Caco-2 (cell line): ENCODE measurements at regions of chr2 and their contacts with region 1.

Region 1: GRCh38 chr2:54106631-54107454 is 8.6 kb upstream of the ACYP2 start:
- DNase-seq: peak in 1 of 2 experiments; percentile 63
- H3K4me3 ChIP-seq: no peak overlapping the region
- H3K4me3 Mint-ChIP-seq: no peak overlapping the region
- H3K27ac Mint-ChIP-seq: no peak overlapping the region
- H3K4me1 ChIP-seq: 0 out of 2 replicates have a peak, but pooled peaks cover 4% of the 10 kb centered on the region
- H3K4me1 Mint-ChIP-seq: no peaks in the 10 kb centered on the region
- H3K27me3 ChIP-seq: no peaks in the 10 kb centered on the region
- H3K27me3 Mint-ChIP-seq: peaks cover 4% of the 10 kb centered on the region
- CTCF ChIP-seq: peak; percentile 69 to 72

Region 2: DNA sequence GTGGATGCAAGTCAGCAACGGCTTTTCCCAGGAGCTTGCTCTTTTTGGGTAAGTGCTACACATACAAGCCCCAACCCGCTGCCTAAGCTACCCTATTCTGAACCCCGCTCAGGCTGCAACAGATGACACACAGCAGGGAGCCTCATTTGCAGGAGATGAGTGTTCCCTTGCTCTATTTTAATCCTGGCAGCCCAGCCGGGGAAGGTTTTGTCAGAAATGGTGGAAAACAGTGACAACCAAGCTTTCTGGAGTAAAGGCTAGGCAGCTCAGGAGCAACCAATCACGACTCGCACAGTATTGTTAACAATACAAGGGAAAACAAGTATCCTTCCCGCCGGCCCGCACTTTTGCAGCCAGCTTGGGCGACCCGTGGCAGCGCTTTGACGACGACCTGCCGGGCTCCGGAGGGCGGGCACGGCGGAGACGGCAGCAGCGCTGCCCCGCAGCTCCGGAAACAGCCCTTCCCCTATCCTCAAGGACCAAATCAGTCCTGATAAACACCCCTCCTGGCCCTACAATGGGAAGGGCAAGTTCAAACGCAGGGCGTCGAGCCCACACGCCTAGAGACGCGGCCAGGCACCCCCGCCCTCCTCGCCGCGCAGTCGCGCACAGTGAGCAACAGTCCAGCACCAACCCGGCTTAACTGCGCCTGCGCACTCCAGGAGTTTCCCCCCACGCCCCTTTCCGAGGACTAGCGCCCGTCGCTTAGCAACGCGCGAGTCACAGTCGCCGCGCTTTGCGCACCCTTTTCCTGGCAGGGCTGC is 223.5 kb after region 1 on chr2:
- CTCF ChIA-PET with region 1: no interaction called
- POLR2A ChIA-PET with region 1: no interaction called
- intact Hi-C with region 1: loop called (anchors 5 kb)
- DNase-seq: peak; percentile 96
- H3K4me3 ChIP-seq: peak overlapping the region; percentile 60
- H3K4me3 Mint-ChIP-seq: peak overlapping the region; percentile 90
- H3K27ac Mint-ChIP-seq: peak overlapping the region; percentile 86
- H3K4me1 ChIP-seq: no peaks in the 10 kb centered on the region
- H3K4me1 Mint-ChIP-seq: peaks cover 13% of the 10 kb centered on the region
- H3K27me3 ChIP-seq: no peaks in the 10 kb centered on the region
- H3K27me3 Mint-ChIP-seq: peaks cover 4% of the 10 kb centered on the region
- CTCF ChIP-seq: no peak

Region 3: GRCh38 chr2:54384301-54385203 is 277.7 kb after region 1 on chr2:
- CTCF ChIA-PET with region 1: no interaction called
- POLR2A ChIA-PET with region 1: no interaction called
- intact Hi-C with region 1: no loop called
- DNase-seq: no peak
- H3K4me3 ChIP-seq: no peak overlapping the region
- H3K4me3 Mint-ChIP-seq: no peak overlapping the region
- H3K27ac Mint-ChIP-seq: no peak overlapping the region
- H3K4me1 ChIP-seq: no peaks in the 10 kb centered on the region
- H3K4me1 Mint-ChIP-seq: no peaks in the 10 kb centered on the region
- H3K27me3 ChIP-seq: no peaks in the 10 kb centered on the region
- H3K27me3 Mint-ChIP-seq: peaks cover 5% of the 10 kb centered on the region
- CTCF ChIP-seq: no peak

Region 4: GRCh38 chr2:54503192-54503591 is 396.3 kb after region 1 on chr2:
- CTCF ChIA-PET with region 1: interaction called, 4 read pairs
- POLR2A ChIA-PET with region 1: no interaction called
- intact Hi-C with region 1: loop called (anchors 5 kb)
- DNase-seq: peak in 1 of 2 experiments; percentile 40
- H3K4me3 ChIP-seq: no peak overlapping the region
- H3K4me3 Mint-ChIP-seq: no peak overlapping the region
- H3K27ac Mint-ChIP-seq: no peak overlapping the region
- H3K4me1 ChIP-seq: no peaks in the 10 kb centered on the region
- H3K4me1 Mint-ChIP-seq: peaks cover 12% of the 10 kb centered on the region
- H3K27me3 ChIP-seq: no peaks in the 10 kb centered on the region
- H3K27me3 Mint-ChIP-seq: no peaks in the 10 kb centered on the region
- CTCF ChIP-seq: peak; percentile 45 to 46

Region 5: GRCh38 chr2:54838585-54839035 is 731.8 kb after region 1 on chr2:
- CTCF ChIA-PET with region 1: interaction called, 15 read pairs
- POLR2A ChIA-PET with region 1: no interaction called
- intact Hi-C with region 1: loop called (anchors 5 kb)
- DNase-seq: peak; percentile 62 to 70
- H3K4me3 ChIP-seq: no peak overlapping the region
- H3K4me3 Mint-ChIP-seq: no peak overlapping the region
- H3K27ac Mint-ChIP-seq: no peak overlapping the region
- H3K4me1 ChIP-seq: no peaks in the 10 kb centered on the region
- H3K4me1 Mint-ChIP-seq: peaks cover 6% of the 10 kb centered on the region
- H3K27me3 ChIP-seq: no peaks in the 10 kb centered on the region
- H3K27me3 Mint-ChIP-seq: no peaks in the 10 kb centered on the region
- CTCF ChIP-seq: peak; percentile 91 to 94

Region 6: GRCh38 chr2:55175254-55176025 is 1068.6 kb after region 1 on chr2:
- CTCF ChIA-PET with region 1: no interaction called
- POLR2A ChIA-PET with region 1: no interaction called
- intact Hi-C with region 1: loop called (anchors 10 kb)
- DNase-seq: peak in 1 of 2 experiments; percentile 36
- H3K4me3 ChIP-seq: no peak overlapping the region
- H3K4me3 Mint-ChIP-seq: no peak overlapping the region
- H3K27ac Mint-ChIP-seq: no peak overlapping the region
- H3K4me1 ChIP-seq: no peaks in the 10 kb centered on the region
- H3K4me1 Mint-ChIP-seq: peaks cover 12% of the 10 kb centered on the region
- H3K27me3 ChIP-seq: no peaks in the 10 kb centered on the region
- H3K27me3 Mint-ChIP-seq: no peaks in the 10 kb centered on the region
- CTCF ChIP-seq: peak; percentile 44 to 50